ENCODE measurements at regions of chr14 and their contacts with region 1.

Region 1: DNA sequence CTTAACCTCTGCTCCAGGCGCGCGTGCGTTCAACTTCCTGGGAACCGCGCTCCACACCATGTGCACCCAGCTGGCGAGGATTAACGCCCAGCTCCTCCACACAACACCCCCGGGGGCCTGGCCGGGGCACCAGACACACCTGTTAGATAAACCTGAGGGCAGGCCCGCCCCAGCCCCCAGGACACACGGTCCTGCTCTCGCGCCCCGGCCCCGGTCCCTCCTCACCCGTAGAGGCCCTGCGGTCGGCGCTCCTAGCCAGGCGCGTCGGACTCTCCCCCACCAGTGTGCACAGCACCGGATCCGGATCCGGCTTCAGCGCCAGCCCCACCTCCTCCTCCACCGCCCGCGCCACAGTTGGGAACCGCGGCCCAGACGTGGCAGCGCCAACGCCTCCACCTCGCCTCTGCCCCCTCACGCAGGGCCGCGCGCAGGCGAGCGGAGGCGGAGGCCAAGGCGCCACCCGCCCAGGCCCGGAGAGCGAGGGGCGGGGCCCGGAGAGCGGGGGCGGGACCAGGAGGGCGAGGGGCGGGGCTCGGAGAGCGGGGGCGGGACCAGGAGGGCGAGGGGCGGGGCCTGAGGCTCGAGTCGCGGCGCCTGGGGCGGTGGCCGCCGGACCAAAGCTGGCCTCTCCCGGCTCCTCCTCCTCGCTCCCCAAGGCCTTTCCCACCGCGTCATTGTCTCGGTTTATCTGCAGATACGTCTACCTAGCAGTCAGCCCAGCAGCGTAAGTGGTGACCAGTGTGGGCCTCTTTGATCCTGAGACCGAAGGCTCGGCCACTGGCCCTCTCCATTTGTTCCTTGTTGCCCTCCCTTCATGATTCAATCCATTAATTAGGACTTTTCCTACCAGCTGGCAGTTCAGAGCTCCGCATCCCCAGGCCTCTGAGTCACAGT is at the start of gene GNPNAT1:
- DNase-seq: peak; percentile 82 to 94
- H3K4me3 ChIP-seq: peak within 1 kb of the TSS; percentile 85
- H3K27ac ChIP-seq: peak within 1 kb of the TSS; percentile 90
- H3K4me1 ChIP-seq: peaks cover 23% of the 10 kb centered on the region
- H3K27me3 ChIP-seq: no peaks in the 10 kb centered on the region
- CTCF ChIP-seq: no peak
- total RNA-seq, gene GNPNAT1: 43.2 and 45.2 TPM in 2 replicates

Region 2: GRCh38 chr14:53032161-53032803 is 240.8 kb after region 1 on chr14:
- CTCF ChIA-PET with region 1: no interaction called
- POLR2A ChIA-PET with region 1: no interaction called
- intact Hi-C with region 1: no loop called
- DNase-seq: peak; percentile 15 to 46
- H3K4me3 ChIP-seq: no peak overlapping the region
- H3K27ac ChIP-seq: no peak overlapping the region
- H3K4me1 ChIP-seq: no peaks in the 10 kb centered on the region; the same call in 1 of the 2 replicates
- H3K27me3 ChIP-seq: no peaks in the 10 kb centered on the region
- CTCF ChIP-seq: no peak

Region 3: GRCh38 chr14:53470351-53471043 is 679.0 kb after region 1 on chr14:
- CTCF ChIA-PET with region 1: no interaction called
- POLR2A ChIA-PET with region 1: interaction called, 13 read pairs
- intact Hi-C with region 1: no loop called
- DNase-seq: peak in 1 of 2 experiments; percentile 6
- H3K4me3 ChIP-seq: no peak overlapping the region
- H3K27ac ChIP-seq: no peak overlapping the region
- H3K4me1 ChIP-seq: no peaks in the 10 kb centered on the region
- H3K27me3 ChIP-seq: no peaks in the 10 kb centered on the region
- CTCF ChIP-seq: no peak